ENCODE measurements at regions of chr17 and their contacts with region 1.

Region 1: GRCh38 chr17:40329839-40330794 is 21.1 kb downstream of the RARA start:
- DNase-seq: no peak
- H3K4me3 ChIP-seq: no peak overlapping the region
- H3K27ac ChIP-seq: no peak overlapping the region
- H3K4me1 ChIP-seq: peaks cover 4% of the 10 kb centered on the region
- H3K27me3 ChIP-seq: no peaks in the 10 kb centered on the region
- CTCF ChIP-seq: no peak

Region 2: DNA sequence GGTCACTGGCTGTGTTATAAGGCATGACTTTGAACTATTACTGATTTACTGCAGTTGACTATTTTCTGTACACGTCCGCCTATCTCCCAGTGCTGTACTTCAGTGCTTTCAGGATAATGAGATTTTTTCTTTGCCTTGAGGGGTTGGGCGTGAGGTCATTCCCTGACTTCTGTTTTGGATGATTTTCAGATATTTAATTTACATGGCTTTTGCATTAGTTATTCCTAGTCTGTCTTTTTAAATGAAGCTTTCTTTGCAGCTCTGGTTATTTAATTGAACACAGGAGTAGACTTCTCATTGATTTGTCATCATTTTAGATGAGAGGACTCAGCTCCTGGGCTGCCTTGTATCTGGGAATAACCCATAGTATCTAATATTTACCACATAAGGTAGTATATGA is 87.3 kb before region 1 on chr17:
- CTCF ChIA-PET with region 1: no interaction called
- POLR2A ChIA-PET with region 1: no interaction called
- intact Hi-C with region 1: no loop called
- DNase-seq: no peak
- H3K4me3 ChIP-seq: no peak overlapping the region
- H3K27ac ChIP-seq: no peak overlapping the region
- H3K4me1 ChIP-seq: no peaks in the 10 kb centered on the region
- H3K27me3 ChIP-seq: no peaks in the 10 kb centered on the region
- CTCF ChIP-seq: no peak

Region 3: DNA sequence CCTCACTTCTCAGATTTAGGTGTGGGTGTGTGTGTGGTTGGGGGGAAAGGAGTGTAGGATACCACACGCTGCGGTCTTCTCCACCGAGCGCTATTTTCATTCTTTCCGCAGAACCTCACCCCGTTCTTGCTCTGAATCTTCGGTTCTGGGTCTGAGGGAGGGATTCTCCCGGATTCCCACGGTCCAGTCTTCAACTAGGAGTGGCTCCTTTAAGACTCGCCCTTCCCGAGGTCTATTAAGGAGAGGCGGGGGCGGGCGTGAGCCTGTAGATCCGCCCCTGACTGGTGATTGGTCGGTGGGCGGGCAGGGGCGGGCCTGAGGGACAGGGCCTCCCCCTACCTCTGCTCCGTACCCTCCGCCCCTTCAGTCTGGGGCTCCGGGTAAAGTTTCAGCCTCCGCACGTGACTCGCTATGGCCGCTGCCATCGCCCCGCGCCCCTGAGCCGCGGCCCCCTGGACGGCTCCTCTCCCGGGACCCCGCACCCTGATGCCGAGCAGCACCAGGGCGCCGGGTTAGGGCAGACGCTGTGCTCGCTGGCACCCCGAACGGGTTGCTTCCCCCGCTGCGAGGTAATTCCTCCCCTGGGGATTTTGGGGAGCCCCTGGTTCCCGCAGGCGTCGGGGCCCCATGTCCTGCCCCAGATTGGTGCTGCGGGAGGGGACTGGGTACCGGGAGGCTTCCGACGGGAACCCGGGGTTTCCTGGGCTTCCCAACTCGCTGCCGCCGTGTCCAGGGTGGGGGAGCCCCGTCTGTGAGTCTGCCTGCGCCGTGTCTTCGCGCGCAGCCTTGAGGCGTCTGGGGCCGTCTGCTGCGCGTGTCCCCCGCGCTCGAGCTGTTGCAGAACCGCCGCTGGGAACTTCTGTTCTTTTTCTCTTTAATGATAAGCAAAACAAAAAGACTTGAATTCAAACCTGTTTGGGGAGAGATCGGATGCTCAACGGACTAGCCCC is 12.0 kb before region 1 on chr17:
- CTCF ChIA-PET with region 1: interaction called, 13 read pairs
- POLR2A ChIA-PET with region 1: no interaction called
- intact Hi-C with region 1: no loop called
- DNase-seq: peak; percentile 94
- H3K4me3 ChIP-seq: peak overlapping the region; percentile 71
- H3K27ac ChIP-seq: peak overlapping the region; percentile 78
- H3K4me1 ChIP-seq: peaks cover 51% of the 10 kb centered on the region
- H3K27me3 ChIP-seq: no peaks in the 10 kb centered on the region
- CTCF ChIP-seq: no peak

Region 4: DNA sequence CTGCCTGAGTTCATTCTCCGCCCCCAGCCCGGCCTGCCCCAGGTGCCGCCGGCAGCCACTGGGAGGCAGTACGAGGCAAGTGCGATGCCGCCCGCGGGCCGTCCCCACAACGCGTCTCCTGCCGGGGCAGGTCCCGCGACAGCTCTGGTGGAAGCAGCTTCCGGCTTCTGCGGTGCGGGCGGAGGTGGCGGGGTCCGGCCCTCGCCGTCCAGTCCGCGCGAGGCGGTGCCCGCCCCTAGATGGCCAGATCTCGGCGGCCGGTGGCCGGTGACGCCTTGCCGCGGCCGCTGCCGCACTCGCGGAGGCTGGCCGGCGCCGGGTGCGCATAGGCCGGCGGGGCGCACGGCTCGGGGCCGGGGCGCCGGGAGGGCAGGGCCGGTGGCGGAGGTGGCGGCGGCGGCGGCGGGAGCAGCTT is 32.6 kb after region 1 on chr17:
- CTCF ChIA-PET with region 1: no interaction called
- POLR2A ChIA-PET with region 1: no interaction called
- intact Hi-C with region 1: no loop called
- DNase-seq: peak; percentile 71
- H3K4me3 ChIP-seq: peak overlapping the region; percentile 42
- H3K27ac ChIP-seq: no peak overlapping the region
- H3K4me1 ChIP-seq: no peaks in the 10 kb centered on the region
- H3K27me3 ChIP-seq: no peaks in the 10 kb centered on the region
- CTCF ChIP-seq: peak; percentile 67

Region 5: DNA sequence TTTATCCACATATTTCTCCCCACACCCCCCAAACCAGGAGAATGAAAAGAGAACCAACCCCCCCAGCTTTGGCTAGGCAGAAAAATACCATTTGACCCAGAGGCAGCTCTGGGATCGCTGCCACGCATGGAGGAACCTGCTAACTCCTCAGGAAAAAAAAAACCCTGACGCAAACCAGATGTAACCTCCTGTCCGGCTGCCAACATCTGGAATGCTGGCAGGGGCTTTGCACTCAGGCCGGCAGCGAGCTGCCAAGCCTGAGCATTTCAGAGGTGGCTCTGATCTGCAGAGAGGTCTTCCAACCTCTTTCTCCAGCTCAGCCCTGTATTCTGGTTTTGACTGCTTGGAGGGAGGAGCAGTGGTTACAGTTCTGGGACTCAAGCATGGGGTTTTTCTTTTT is 121.3 kb after region 1 on chr17:
- CTCF ChIA-PET with region 1: no interaction called
- POLR2A ChIA-PET with region 1: interaction called, 10 read pairs
- intact Hi-C with region 1: no loop called
- DNase-seq: no peak
- H3K4me3 ChIP-seq: no peak overlapping the region
- H3K27ac ChIP-seq: no peak overlapping the region
- H3K4me1 ChIP-seq: no peaks in the 10 kb centered on the region
- H3K27me3 ChIP-seq: no peaks in the 10 kb centered on the region
- CTCF ChIP-seq: no peak

Region 6: GRCh38 chr17:40830085-40830776 is 500.1 kb after region 1 on chr17:
- CTCF ChIA-PET with region 1: no interaction called
- POLR2A ChIA-PET with region 1: interaction called, 11 read pairs
- intact Hi-C with region 1: no loop called
- DNase-seq: no peak
- H3K4me3 ChIP-seq: no peak overlapping the region
- H3K27ac ChIP-seq: no peak overlapping the region
- H3K4me1 ChIP-seq: peaks cover 21% of the 10 kb centered on the region
- H3K27me3 ChIP-seq: no peaks in the 10 kb centered on the region
- CTCF ChIP-seq: no peak